GM18951 (cell line): ENCODE measurements at regions of chr13 and their contacts with region 1.

Region 1: GRCh38 chr13:109256866-109257760 is 529.3 kb downstream of the IRS2 start:
- POLR2A ChIP-seq: no peak

Region 2: GRCh38 chr13:109180905-109181425 is 76.1 kb before region 1 on chr13:
- in situ Hi-C with region 1: loop called (anchors 10 kb)
- POLR2A ChIP-seq: no peak

Region 3: DNA sequence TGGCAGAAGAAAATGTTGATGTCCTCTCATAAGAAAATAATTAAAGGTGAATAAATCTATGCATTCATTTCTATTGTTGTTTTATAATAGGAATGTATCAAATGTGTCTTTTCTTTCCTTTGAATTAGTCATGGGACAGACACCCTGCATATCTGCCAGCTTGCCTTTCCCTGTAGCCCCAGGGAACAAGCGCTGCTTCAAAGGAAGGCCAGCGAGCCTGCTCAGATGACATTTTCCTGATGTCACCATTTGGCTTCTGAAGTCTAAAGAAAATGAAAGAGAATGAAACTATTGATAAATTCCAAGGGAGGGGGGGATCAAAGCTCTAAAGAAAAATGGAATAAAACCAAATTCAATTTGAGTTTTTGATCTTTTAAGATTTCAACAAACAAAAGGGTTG is 45.5 kb before region 1 on chr13:
- in situ Hi-C with region 1: no loop called
- POLR2A ChIP-seq: no peak